ENCODE measurements at regions of chr11 and their contacts with region 1.

Region 1: GRCh38 chr11:72599325-72600122 is 74.7 kb downstream of the PDE2A start:
- DNase-seq: no peak
- ATAC-seq: no peak
- H3K4me3 ChIP-seq: no peak overlapping the region
- H3K27ac ChIP-seq: no peak overlapping the region
- H3K4me1 ChIP-seq: no peaks in the 10 kb centered on the region
- H3K27me3 ChIP-seq: no peaks in the 10 kb centered on the region
- CTCF ChIP-seq: no peak

Region 2: GRCh38 chr11:72635309-72635915 is 35.9 kb after region 1 on chr11:
- intact Hi-C with region 1: loop called (anchors 5 kb)
- DNase-seq: no peak
- ATAC-seq: no peak
- H3K4me3 ChIP-seq: no peak overlapping the region
- H3K27ac ChIP-seq: no peak overlapping the region
- H3K4me1 ChIP-seq: peaks cover 6% of the 10 kb centered on the region
- H3K27me3 ChIP-seq: peaks cover 8% of the 10 kb centered on the region
- CTCF ChIP-seq: no peak

Measured in upper lobe of right lung (tissue), 1 donor.